ENCODE measurements at regions of chr12 and their contacts with region 1.

Region 1: GRCh38 chr12:94525951-94526350 is 66.3 kb upstream of the CEP83 start:
- DNase-seq: no peak
- H3K4me3 ChIP-seq: no peak overlapping the region
- H3K27ac ChIP-seq: no peak overlapping the region
- H3K4me1 ChIP-seq: no peaks in the 10 kb centered on the region
- H3K27me3 ChIP-seq: peaks cover 0 to 9% of the 10 kb centered on the region in 2 donors
- CTCF ChIP-seq: no peak

Region 2: GRCh38 chr12:93990832-93991803 is 534.8 kb before region 1 on chr12:
- intact Hi-C with region 1: no loop called
- DNase-seq: peak; percentile 48 to 68
- H3K4me3 ChIP-seq: no peak overlapping the region
- H3K27ac ChIP-seq: no peak overlapping the region
- H3K4me1 ChIP-seq: peaks cover 0 to 12% (median 0%) of the 10 kb centered on the region in 4 donors
- H3K27me3 ChIP-seq: no peaks in the 10 kb centered on the region
- CTCF ChIP-seq: peak in 1 of 2 experiments; percentile 31

Region 3: GRCh38 chr12:94336211-94336925 is 189.6 kb before region 1 on chr12:
- intact Hi-C with region 1: loop called (anchors 10 kb)
- DNase-seq: no peak
- H3K4me3 ChIP-seq: no peak overlapping the region
- H3K27ac ChIP-seq: no peak overlapping the region
- H3K4me1 ChIP-seq: no peaks in the 10 kb centered on the region
- H3K27me3 ChIP-seq: no peaks in the 10 kb centered on the region
- CTCF ChIP-seq: no peak

Region 4: DNA sequence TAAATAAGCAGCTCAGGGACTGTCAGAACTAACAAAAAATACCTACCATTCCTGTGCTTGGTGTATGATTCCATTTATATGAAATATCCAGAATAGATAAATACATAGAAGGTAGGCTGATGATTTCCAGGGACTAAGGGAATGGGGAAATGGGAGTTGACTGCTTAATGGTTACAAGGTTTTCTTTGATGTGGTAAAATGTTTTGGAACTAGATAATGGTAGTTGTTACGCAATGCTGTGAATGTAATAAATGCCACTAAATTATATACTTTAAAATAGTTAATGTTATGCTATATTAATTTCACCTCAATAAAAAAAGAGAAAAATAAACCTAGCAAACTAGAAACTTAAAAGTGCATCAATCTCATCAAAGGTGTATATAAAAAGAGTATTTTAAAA is 107.4 kb before region 1 on chr12:
- intact Hi-C with region 1: no loop called
- DNase-seq: no peak
- H3K4me3 ChIP-seq: no peak overlapping the region
- H3K27ac ChIP-seq: no peak overlapping the region
- H3K4me1 ChIP-seq: no peaks in the 10 kb centered on the region
- H3K27me3 ChIP-seq: no peaks in the 10 kb centered on the region
- CTCF ChIP-seq: no peak

Region 5: GRCh38 chr12:94459728-94460615 is 66.0 kb before region 1 on chr12 and contains the start of gene CEP83:
- intact Hi-C with region 1: no loop called
- DNase-seq: peak; percentile 94 to 98
- H3K4me3 ChIP-seq: peak within 1 kb of the TSS; percentile 63 to 81
- H3K27ac ChIP-seq: peak within 1 kb of the TSS; percentile 76 to 93
- H3K4me1 ChIP-seq: peaks cover 0 to 22% (median 5%) of the 10 kb centered on the region in 4 donors
- H3K27me3 ChIP-seq: no peaks in the 10 kb centered on the region
- CTCF ChIP-seq: no peak

Region 6: DNA sequence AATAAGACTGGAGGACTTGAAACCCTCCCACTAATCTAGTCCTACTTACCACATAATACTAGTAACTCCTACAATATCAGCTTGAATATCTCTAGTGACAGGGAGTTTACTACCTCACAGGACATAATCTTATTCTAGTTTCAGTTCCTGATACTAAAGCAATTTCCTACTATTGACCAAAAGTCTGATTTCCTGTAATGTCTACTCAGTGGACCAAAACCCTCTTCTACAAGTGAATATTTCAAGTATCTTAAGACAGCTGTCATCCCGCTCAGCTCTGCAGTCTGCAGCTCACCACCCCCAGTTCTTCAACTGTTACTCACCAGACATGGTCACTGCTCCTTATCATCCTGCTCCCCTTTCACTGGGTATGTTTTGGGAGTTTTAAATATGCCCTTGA is 195.2 kb after region 1 on chr12:
- intact Hi-C with region 1: no loop called
- DNase-seq: no peak
- H3K4me3 ChIP-seq: no peak overlapping the region
- H3K27ac ChIP-seq: no peak overlapping the region
- H3K4me1 ChIP-seq: peaks cover 0 to 12% (median 0%) of the 10 kb centered on the region in 4 donors
- H3K27me3 ChIP-seq: no peaks in the 10 kb centered on the region
- CTCF ChIP-seq: no peak